ENCODE measurements at regions of chr11 and their contacts with region 1.

Region 1: GRCh38 chr11:64355078-64355940 is 3.7 kb upstream of the RPS6KA4 start:
- DNase-seq: peak; percentile 39
- H3K4me3 ChIP-seq: peak overlapping the region; percentile 51
- H3K27ac ChIP-seq: no peak overlapping the region
- H3K27me3 ChIP-seq: no peaks in the 10 kb centered on the region
- CTCF ChIP-seq: peak; percentile 83

Region 2: DNA sequence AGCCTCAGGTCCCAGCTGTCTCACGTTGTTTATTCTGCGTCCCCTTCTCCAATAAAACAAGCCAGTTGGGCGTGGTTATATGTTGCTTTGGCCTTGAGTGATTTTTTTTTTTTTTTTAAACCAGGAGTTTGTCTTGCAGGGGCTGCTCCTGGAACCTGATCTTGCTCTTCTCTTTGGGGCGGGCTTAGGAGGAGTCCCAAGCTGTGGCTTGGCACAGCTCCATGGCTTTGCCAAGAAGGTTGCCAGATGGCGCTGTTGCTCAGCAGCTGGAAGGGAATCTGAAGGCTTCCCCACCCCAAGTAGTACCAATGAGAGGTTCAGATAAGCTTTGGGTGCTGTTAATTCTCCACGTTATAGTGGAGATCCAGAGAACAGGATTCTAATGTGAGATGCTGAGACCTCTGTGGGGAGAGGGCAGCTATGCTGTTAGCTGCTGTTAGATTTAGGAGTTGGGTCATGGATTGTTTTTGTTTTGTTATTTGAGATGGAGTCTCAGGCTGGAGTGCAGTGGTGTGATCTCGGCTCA is 150.8 kb before region 1 on chr11:
- CTCF ChIA-PET with region 1: interaction called, 21 read pairs
- POLR2A ChIA-PET with region 1: no interaction called
- DNase-seq: peak; percentile 95
- H3K4me3 ChIP-seq: no peak overlapping the region
- H3K27ac ChIP-seq: no peak overlapping the region
- H3K27me3 ChIP-seq: no peaks in the 10 kb centered on the region
- CTCF ChIP-seq: peak; percentile 67

Region 3: DNA sequence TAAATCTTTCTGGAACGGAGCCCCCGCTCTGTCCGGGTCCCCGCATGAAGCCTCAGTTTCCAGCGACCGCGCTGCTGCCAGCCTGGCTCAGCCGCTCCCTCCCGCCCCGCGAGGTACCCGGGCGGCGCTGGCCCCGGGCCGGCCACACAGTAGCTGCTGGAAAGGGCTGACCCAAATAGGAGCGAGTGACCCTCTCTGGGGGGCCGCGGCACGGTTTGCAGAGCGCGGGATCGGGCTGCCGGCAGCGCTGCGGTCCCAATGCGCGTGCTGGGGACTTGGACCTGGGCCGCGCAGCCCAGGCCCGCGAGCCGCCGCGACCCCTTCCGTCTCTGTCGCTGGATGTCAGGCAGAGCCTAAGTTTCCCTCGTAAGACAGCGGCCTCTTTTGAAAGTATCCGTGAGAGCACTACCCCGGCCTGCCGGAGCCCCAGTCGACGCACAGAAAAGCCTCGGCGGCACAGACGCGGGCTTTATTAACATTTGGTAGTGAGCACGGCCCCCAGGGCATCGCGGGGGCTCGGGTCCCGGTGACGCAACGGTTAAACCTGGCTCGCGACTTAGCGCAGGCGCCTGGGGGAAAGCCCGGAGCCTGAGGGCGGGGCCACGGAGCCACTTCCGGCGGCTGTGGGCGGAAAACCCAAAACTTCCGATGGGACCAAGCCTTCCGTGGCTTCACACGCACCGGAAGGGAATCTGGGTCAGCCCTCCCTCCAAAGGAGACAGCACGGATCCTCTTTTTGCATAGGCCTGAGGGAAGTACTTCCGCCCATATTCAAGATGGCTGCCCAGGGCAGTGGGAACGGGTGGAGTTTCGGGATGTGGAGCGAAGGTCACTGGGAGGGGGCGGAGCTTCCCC is 85.7 kb before region 1 on chr11:
- CTCF ChIA-PET with region 1: interaction called, 10 read pairs
- POLR2A ChIA-PET with region 1: interaction called, 3 read pairs
- DNase-seq: peak; percentile 100
- H3K4me3 ChIP-seq: peak overlapping the region; percentile 74
- H3K27ac ChIP-seq: peak overlapping the region; percentile 95
- H3K27me3 ChIP-seq: no peaks in the 10 kb centered on the region
- CTCF ChIP-seq: no peak; the same call in 1 of the 2 replicates

Region 4: DNA sequence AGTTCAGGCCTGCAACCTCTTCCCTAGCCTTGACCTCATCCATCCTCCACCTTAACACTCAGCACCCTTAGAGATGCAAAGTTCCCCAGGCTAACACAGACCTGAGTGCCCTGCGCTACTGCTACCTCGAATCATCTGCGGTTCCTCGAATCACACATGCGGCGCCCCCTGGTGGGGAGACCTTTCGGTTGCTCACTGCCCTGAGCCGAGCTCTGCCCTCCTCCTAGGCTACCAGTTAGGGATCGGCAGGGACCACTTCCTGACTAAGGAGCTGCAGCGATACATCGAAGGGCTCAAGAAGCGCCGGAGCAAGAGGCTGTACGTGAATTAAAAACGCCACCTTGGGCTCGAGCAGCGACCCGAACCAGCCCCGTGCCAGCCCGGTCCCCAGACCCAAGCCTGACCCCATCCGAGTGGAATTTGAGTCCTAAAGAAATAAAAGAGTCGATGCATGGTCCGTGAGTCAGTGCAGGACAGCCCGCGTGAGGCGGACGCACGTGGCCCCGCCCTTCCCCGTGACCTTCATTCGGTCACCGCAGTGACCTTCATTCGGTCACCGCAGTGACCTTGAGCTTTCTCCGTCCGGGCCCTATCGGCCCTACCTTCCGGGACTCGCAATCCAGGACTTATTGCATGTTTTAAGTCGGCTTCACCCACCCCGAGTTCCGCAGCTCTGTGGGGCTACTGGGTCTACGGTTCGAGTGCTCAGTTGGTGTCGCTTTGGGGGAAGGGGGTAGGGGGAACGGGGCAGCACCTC is 50.8 kb before region 1 on chr11:
- CTCF ChIA-PET with region 1: interaction called, 62 read pairs
- POLR2A ChIA-PET with region 1: interaction called, 4 read pairs
- DNase-seq: peak; percentile 78
- H3K4me3 ChIP-seq: peak overlapping the region; percentile 72
- H3K27ac ChIP-seq: peak overlapping the region; percentile 84
- H3K27me3 ChIP-seq: peaks cover 14% of the 10 kb centered on the region
- CTCF ChIP-seq: peak; percentile 84

Region 5: GRCh38 chr11:64324692-64325469 is 30.4 kb before region 1 on chr11:
- CTCF ChIA-PET with region 1: interaction called, 12 read pairs
- POLR2A ChIA-PET with region 1: no interaction called
- DNase-seq: no peak
- H3K4me3 ChIP-seq: no peak overlapping the region
- H3K27ac ChIP-seq: no peak overlapping the region
- H3K27me3 ChIP-seq: peaks cover 3% of the 10 kb centered on the region
- CTCF ChIP-seq: no peak

Region 6: DNA sequence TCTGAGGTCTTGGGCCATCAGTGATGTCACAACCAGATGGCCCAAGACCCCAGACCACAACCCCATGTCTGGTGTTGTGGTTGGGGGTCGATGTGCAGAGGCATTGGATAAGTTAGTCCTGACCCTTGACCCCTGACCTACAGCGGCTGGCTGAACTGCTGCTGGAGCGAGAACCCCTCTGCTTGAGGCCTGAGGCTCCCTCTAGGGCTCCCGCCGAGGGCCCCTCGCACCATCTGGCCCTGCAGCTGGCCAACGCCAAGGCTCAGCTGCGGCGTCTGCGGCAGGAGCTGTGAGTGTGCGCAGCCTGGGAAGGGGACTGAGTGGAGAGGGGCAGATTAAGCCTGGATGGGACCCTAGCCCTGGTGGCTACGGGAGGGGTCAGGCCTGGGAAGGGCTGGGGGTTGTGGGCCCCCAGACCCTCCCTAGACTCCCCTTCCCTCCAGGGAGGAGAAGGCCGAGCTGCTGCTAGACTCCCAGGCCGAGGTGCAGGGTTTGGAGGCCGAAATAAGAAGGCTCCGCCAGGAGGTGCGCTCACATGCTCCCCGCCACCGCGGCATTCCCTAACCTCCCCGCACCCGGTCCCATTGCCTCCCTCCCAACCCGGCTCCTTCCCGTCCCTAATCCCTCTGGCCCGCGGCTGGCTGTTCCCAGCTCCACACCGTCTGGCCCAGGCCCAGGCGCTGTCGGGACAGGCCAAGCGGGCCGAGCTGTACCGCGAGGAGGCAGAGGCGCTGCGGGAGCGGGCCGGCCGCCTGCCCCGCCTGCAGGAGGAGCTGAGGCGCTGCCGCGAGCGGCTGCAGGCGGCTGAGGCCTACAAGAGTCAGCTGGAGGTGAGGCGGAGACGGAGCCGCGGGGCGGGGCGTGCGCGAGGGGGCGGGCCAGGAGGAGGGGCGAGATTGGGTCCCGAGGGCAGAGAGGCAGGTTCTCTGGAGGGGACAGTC is 13.2 kb before region 1 on chr11:
- CTCF ChIA-PET with region 1: interaction called, 86 read pairs
- POLR2A ChIA-PET with region 1: interaction called, 6 read pairs
- DNase-seq: peak; percentile 42
- H3K4me3 ChIP-seq: peak overlapping the region; percentile 51
- H3K27ac ChIP-seq: peak overlapping the region; percentile 57
- H3K27me3 ChIP-seq: no peaks in the 10 kb centered on the region
- CTCF ChIP-seq: peak; percentile 32

Measured in AG04450 (cell line).